Activated T-helper 1 cell treated with anti-CD3 and anti-CD28 coated beads, Interleukin-12 subunit alpha, Interleukin-12 subunit beta, Interleukin-2, Interleukin-4 antibody, amounts not matched to agents 30 ng/mL and 10 ng/mL and 1 ng/mL, durations not matched to agents 14 hours and 24 hours and 36 hours (primary cell): ENCODE measurements at regions of chr2 and their contacts with region 1.

Region 1: GRCh38 chr2:98608116-98608999 is at the starts of genes COA5 and UNC50:
- DNase-seq: peak; percentile 91
- H3K4me3 Mint-ChIP-seq: peak within 1 kb of the TSS; percentile 94
- H3K27ac Mint-ChIP-seq: peak within 1 kb of the TSS; percentile 94
- H3K4me1 Mint-ChIP-seq: peaks cover 65% of the 10 kb centered on the region
- H3K27me3 Mint-ChIP-seq: peaks cover 3% of the 10 kb centered on the region
- total RNA-seq, gene COA5: 20.3 and 21.2 TPM in 2 replicates
- total RNA-seq, gene UNC50: 41.4 and 43.0 TPM in 2 replicates

Region 2: DNA sequence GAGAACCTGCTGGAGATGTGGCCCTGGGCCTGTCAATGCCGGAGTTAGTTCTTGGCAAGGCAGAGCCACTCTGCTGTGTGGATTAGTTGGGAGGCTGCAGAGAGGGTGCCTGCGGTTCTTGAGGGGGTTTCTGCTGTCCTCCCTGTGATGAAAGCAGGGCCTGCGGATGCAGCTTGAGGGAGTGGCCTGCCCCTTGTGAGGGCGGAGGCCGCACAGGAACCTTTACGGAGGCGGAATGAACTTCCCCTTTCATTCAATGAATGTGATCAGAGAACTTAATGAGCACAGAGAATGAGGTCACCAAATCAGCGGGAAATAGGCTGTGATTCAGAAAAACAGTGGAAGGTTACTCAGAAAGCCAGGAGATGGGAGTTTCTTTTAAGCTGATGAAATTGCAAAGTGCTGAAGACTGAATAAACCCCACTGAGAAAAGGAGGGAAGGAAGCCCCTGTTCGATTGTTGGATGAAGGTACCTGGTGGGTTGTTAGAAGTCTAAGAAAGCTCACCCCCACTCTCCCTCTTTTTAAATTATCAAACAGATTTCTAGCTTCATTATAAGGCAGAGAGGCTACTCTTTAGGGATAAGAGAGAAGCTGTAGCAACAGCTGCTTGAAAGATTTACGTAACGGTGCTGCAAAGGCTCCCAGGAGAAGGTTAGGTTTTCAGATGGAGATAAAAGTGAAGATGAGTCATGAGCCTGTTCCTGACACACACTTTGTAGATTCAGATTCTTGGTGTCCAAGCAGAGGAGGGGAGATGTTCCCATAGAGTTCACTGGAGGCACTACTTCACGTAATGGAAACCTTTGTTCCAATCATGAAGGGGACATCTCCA is 474.0 kb before region 1 on chr2:
- intact Hi-C with region 1: loop called (anchors 10 kb)
- DNase-seq: peak; percentile 36
- H3K4me3 Mint-ChIP-seq: peak overlapping the region; percentile 13
- H3K27ac Mint-ChIP-seq: peak overlapping the region; percentile 52
- H3K4me1 Mint-ChIP-seq: peaks cover 19% of the 10 kb centered on the region
- H3K27me3 Mint-ChIP-seq: peaks cover 9% of the 10 kb centered on the region

Region 3: GRCh38 chr2:98548920-98549818 is 59.2 kb before region 1 on chr2:
- intact Hi-C with region 1: loop called (anchors 2 kb)
- DNase-seq: no peak
- H3K4me3 Mint-ChIP-seq: peak overlapping the region; percentile 9
- H3K27ac Mint-ChIP-seq: peak overlapping the region; percentile 35
- H3K4me1 Mint-ChIP-seq: peaks cover 72% of the 10 kb centered on the region
- H3K27me3 Mint-ChIP-seq: no peaks in the 10 kb centered on the region

Region 4: GRCh38 chr2:98771721-98772524 is 163.6 kb after region 1 on chr2:
- intact Hi-C with region 1: loop called (anchors 5 kb)
- DNase-seq: peak; percentile 63
- H3K4me3 Mint-ChIP-seq: peak overlapping the region; percentile 92
- H3K27ac Mint-ChIP-seq: peak overlapping the region; percentile 99
- H3K4me1 Mint-ChIP-seq: peaks cover 64% of the 10 kb centered on the region
- H3K27me3 Mint-ChIP-seq: peaks cover 2% of the 10 kb centered on the region

Region 5: GRCh38 chr2:99180755-99181623 is 572.6 kb after region 1 on chr2 and contains the starts of genes MITD1 and MRPL30:
- intact Hi-C with region 1: loop called (anchors 1 kb)
- DNase-seq: peak; percentile 90
- H3K4me3 Mint-ChIP-seq: peak within 1 kb of the TSS; percentile 99
- H3K27ac Mint-ChIP-seq: peak within 1 kb of the TSS; percentile 96
- H3K4me1 Mint-ChIP-seq: peaks cover 36% of the 10 kb centered on the region
- H3K27me3 Mint-ChIP-seq: no peaks in the 10 kb centered on the region
- total RNA-seq, gene MITD1: 45.3 and 50.1 TPM in 2 replicates
- total RNA-seq, gene MRPL30: 25.5 and 27.8 TPM in 2 replicates